Sciatic nerve (tissue), 2 donors: ENCODE measurements at regions of chr19 and their contacts with region 1.

Region 1: DNA sequence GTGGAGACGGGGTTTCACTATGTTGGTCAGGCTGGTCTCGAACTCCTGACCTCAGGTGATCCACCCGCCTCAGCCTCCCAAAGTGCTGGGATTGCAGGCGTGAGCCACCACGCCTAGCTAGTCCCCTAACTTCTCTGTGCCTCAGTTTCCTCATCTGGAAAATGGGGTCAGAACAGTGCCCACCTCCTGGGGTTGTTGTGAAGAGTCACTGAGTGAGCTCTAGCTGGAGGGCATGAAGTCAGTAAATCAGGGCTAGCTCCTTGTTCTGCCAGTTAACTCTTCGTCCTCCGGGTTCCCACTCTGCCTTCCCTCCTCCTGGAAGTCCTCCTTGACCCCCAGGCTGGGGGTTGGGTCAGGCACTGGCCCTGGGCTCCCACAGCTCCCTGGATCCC is 9.5 kb downstream of the EHD2 start:
- DNase-seq: no peak
- ATAC-seq: no peak

Region 2: GRCh38 chr19:48872182-48872883 is 1149.6 kb after region 1 on chr19 and contains the start of gene PPP1R15A:
- intact Hi-C with region 1: loop called (anchors 5 kb)
- DNase-seq: peak; percentile 100
- ATAC-seq: peak; percentile 80
- total RNA-seq, gene PPP1R15A: 95.8 TPM